OCI-LY7 (cell line): ENCODE measurements at regions of chr1 and their contacts with region 1.

Region 1: GRCh38 chr1:201850053-201850397 is 21.1 kb downstream of the IPO9 start:
- DNase-seq: no peak
- H3K4me3 ChIP-seq: no peak overlapping the region
- H3K27ac ChIP-seq: no peak overlapping the region
- H3K4me1 ChIP-seq: no peaks in the 10 kb centered on the region
- CTCF ChIP-seq: no peak

Region 2: GRCh38 chr1:201828820-201829774 is 20.9 kb before region 1 on chr1 and contains the start of gene IPO9:
- CTCF ChIA-PET with region 1: interaction called, 3 read pairs
- POLR2A ChIA-PET with region 1: interaction called, 11 read pairs
- intact Hi-C with region 1: no loop called
- DNase-seq: peak; percentile 94
- H3K4me3 ChIP-seq: peak within 1 kb of the TSS; percentile 88
- H3K27ac ChIP-seq: peak within 1 kb of the TSS; percentile 77
- H3K4me1 ChIP-seq: peaks cover 30% of the 10 kb centered on the region
- CTCF ChIP-seq: peak; percentile 93
- total RNA-seq, gene IPO9: 47.2 and 53.3 TPM in 2 replicates

Region 3: GRCh38 chr1:201838381-201838780 is 11.6 kb before region 1 on chr1:
- CTCF ChIA-PET with region 1: interaction called, 3 read pairs
- POLR2A ChIA-PET with region 1: interaction called, 13 read pairs
- intact Hi-C with region 1: no loop called
- DNase-seq: no peak
- H3K4me3 ChIP-seq: no peak overlapping the region
- H3K27ac ChIP-seq: no peak overlapping the region
- H3K4me1 ChIP-seq: peaks cover 4% of the 10 kb centered on the region
- CTCF ChIP-seq: no peak